HAP-1 (cell line): ENCODE measurements at regions of chr15 and their contacts with region 1.

Region 1: GRCh38 chr15:75307778-75308391 is 25.2 kb downstream of the GOLGA6D start:
- DNase-seq: peak; percentile 62 to 91
- H3K4me3 ChIP-seq: no peak overlapping the region
- H3K4me1 ChIP-seq: peaks cover 11% of the 10 kb centered on the region
- H3K27me3 ChIP-seq: peaks cover 24% of the 10 kb centered on the region

Region 2: GRCh38 chr15:74799856-74800547 is 507.9 kb before region 1 on chr15:
- in situ Hi-C with region 1: loop called (anchors 25 kb)
- DNase-seq: peak; percentile 74 to 89
- H3K4me3 ChIP-seq: no peak overlapping the region
- H3K4me1 ChIP-seq: no peaks in the 10 kb centered on the region
- H3K27me3 ChIP-seq: no peaks in the 10 kb centered on the region